GM12878 (cell line): ENCODE measurements at regions of chr14 and their contacts with region 1.

Region 1: DNA sequence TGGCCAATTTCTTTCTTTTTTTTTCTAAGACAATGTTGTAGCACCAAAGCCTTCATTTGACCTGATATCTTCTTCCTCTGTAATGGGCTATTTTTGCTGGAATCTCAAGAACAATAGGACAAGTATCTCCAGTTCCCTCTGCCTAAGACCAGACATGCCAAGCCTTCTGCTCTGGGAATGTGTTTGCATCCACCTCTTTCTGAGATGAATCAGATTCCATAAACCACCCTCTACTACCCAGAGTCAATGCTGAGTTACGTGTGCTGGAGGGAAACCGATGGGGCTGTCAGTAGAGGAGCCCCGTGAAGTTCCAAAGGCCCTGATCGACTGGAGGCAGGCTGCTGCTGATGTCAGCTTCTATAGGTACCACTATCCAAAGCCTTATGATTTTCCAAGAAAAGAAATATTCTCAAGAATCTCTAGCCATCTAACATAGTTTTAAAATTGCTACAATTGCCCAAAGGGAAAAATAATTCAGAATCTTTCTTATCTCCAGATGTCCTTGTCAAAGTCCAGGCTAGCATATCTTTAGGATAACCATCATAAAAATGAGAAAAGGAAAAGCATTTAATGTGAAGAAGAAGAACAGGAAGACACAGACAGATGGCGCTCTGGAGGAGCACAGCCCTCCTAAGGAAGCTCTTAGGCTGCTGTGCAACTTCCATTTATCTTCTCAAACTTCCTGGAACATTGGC is 101.9 kb downstream of the SLC8A3 start:
- DNase-seq: no peak
- ATAC-seq: peak; percentile 37; the same call in 1 of the 3 replicates
- H3K4me3 ChIP-seq: no peak overlapping the region
- H3K27ac ChIP-seq: no peak overlapping the region
- H3K4me1 ChIP-seq: no peaks in the 10 kb centered on the region
- H3K27me3 ChIP-seq: peaks cover 0 to 5% of the 10 kb centered on the region in 2 experiments; a peak in 2 of 4 replicates
- CTCF ChIP-seq: peak; percentile 47 to 59 (median 53); a peak in 4 of 6 replicates
- EP300 ChIP-seq: no peak
- POLR2A ChIP-seq: no peak
- RAD21 ChIP-seq: peak; percentile 65

Region 2: DNA sequence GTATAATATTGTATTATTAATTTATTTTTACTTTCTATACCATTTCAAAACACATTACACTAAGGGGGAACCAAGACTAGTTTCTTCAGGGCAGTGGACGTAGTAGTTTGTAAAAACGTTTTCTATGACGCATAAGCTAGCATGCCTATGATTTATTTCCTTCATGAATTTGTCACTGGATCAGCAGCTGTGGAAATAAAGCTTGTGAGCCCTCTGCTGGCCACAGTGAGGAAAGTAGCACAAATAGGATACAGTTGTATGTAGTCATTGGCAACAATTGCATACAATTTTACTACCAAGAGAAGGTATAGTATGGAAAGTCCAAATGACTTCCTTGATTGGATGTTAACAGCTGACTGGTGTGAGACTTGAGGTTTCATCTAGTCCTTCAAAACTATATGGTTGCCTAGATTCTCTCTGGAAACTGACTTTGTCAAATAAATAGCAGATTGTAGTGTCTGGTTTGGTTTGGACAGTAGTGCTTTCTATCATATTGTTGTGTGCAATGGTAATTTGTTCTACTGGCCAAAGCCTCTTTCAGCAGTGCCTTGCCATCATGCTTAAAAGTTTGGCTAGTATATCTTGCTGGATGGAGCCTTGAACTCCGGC is 626.6 kb before region 1 on chr14:
- CTCF ChIA-PET with region 1: no interaction called
- POLR2A ChIA-PET with region 1: no interaction called
- RAD21 ChIA-PET with region 1: no interaction called
- SMC1A ChIA-PET with region 1: no interaction called
- in situ Hi-C with region 1: no loop called
- intact Hi-C with region 1: no loop called
- DNase-seq: peak; percentile 25
- ATAC-seq: peak; percentile 96
- H3K4me3 ChIP-seq: no peak overlapping the region
- H3K27ac ChIP-seq: no peak overlapping the region
- H3K4me1 ChIP-seq: no peaks in the 10 kb centered on the region
- H3K27me3 ChIP-seq: no peaks in the 10 kb centered on the region
- CTCF ChIP-seq: peak; percentile 69 to 91 (median 81); a peak in 5 of 6 replicates
- EP300 ChIP-seq: no peak
- POLR2A ChIP-seq: no peak
- RAD21 ChIP-seq: peak; percentile 92

Region 3: GRCh38 chr14:70073924-70074566 is 12.8 kb before region 1 on chr14:
- CTCF ChIA-PET with region 1: interaction called, 13 read pairs
- POLR2A ChIA-PET with region 1: no interaction called
- RAD21 ChIA-PET with region 1: interaction called, 4 read pairs
- SMC1A ChIA-PET with region 1: interaction called, 4 read pairs
- in situ Hi-C with region 1: no loop called
- intact Hi-C with region 1: no loop called
- DNase-seq: no peak
- ATAC-seq: peak; percentile 92
- H3K4me3 ChIP-seq: no peak overlapping the region
- H3K27ac ChIP-seq: no peak overlapping the region
- H3K4me1 ChIP-seq: no peaks in the 10 kb centered on the region
- H3K27me3 ChIP-seq: peaks cover 0 to 2% of the 10 kb centered on the region in 2 experiments; a peak in 2 of 4 replicates
- CTCF ChIP-seq: peak; percentile 77 to 89 (median 82)
- EP300 ChIP-seq: no peak
- POLR2A ChIP-seq: no peak
- RAD21 ChIP-seq: peak; percentile 58

Region 4: DNA sequence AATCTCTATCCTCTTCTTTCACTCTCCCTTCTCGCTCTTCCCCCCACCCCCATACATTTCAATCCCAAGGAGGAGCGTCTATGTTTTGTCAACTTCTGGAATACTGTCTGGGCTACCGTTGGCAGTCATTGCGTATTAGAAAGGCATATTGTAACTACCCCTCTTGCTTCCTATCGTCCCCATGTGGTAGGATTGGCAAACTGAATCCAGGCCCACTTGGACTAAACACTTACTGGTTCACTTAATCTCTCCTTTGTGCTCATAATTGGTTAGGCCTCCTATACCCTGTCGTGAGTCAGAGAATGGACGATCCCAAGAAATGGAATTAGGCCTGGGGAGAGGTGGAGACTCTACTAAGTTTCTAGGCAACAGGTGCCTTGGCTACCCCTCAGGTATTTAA is 170.7 kb after region 1 on chr14:
- CTCF ChIA-PET with region 1: interaction called, 13 read pairs
- POLR2A ChIA-PET with region 1: no interaction called
- RAD21 ChIA-PET with region 1: interaction called, 6 read pairs
- SMC1A ChIA-PET with region 1: interaction called, 4 read pairs
- in situ Hi-C with region 1: no loop called
- intact Hi-C with region 1: loop called (anchors 5 kb)
- DNase-seq: no peak
- ATAC-seq: peak; percentile 68; the same call in 2 of the 3 replicates
- H3K4me3 ChIP-seq: no peak overlapping the region
- H3K27ac ChIP-seq: no peak overlapping the region
- H3K4me1 ChIP-seq: no peaks in the 10 kb centered on the region
- H3K27me3 ChIP-seq: peaks cover 0 to 2% of the 10 kb centered on the region in 2 experiments; a peak in 2 of 4 replicates
- CTCF ChIP-seq: peak; percentile 55 to 67 (median 60)
- EP300 ChIP-seq: no peak
- POLR2A ChIP-seq: no peak
- RAD21 ChIP-seq: peak; percentile 43

Region 5: GRCh38 chr14:70317969-70318634 is 231.3 kb after region 1 on chr14:
- CTCF ChIA-PET with region 1: interaction called, 9 read pairs
- POLR2A ChIA-PET with region 1: no interaction called
- RAD21 ChIA-PET with region 1: no interaction called
- SMC1A ChIA-PET with region 1: interaction called, 3 read pairs
- in situ Hi-C with region 1: no loop called
- intact Hi-C with region 1: loop called (anchors 5 kb)
- DNase-seq: peak; percentile 2
- ATAC-seq: peak; percentile 71
- H3K4me3 ChIP-seq: no peak overlapping the region
- H3K27ac ChIP-seq: no peak overlapping the region
- H3K4me1 ChIP-seq: no peaks in the 10 kb centered on the region
- H3K27me3 ChIP-seq: no peaks in the 10 kb centered on the region
- CTCF ChIP-seq: peak; percentile 37 to 57 (median 38); a peak in 4 of 6 replicates
- EP300 ChIP-seq: no peak
- POLR2A ChIP-seq: no peak
- RAD21 ChIP-seq: peak; percentile 67

Region 6: DNA sequence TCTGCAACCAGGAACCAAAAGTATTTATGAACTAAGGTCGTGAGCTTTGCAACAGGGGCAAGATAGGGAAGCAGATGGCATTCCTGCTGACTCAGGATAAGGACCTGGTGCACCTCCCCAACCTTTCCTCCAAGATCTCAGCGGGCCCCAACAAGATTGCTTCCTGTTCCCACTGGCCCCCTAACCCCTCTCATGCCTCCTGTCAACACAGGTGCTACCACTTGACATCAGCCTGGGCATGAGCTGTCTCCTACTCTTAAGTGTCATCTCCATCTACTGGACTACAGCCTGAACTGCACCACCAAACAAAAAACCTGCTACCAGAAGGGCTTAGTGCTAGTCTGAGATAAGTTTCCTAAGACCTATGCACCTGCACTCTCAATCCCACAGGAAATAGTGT is 481.0 kb after region 1 on chr14:
- CTCF ChIA-PET with region 1: interaction called, 5 read pairs
- POLR2A ChIA-PET with region 1: no interaction called
- RAD21 ChIA-PET with region 1: no interaction called
- SMC1A ChIA-PET with region 1: interaction called, 4 read pairs
- in situ Hi-C with region 1: no loop called
- intact Hi-C with region 1: loop called (anchors 1 kb)
- DNase-seq: no peak
- ATAC-seq: peak; percentile 94
- H3K4me3 ChIP-seq: no peak overlapping the region
- H3K27ac ChIP-seq: no peak overlapping the region
- H3K4me1 ChIP-seq: no peaks in the 10 kb centered on the region
- H3K27me3 ChIP-seq: no peaks in the 10 kb centered on the region
- CTCF ChIP-seq: peak; percentile 57 to 64 (median 58)
- EP300 ChIP-seq: no peak
- POLR2A ChIP-seq: no peak
- RAD21 ChIP-seq: peak; percentile 73